ENCODE measurements at regions of chr12 and their contacts with region 1.

Region 1: GRCh38 chr12:120301962-120302815 is at the start of gene SIRT4:
- DNase-seq: peak; percentile 94
- ATAC-seq: peak; percentile 100
- H3K4me3 ChIP-seq: peak within 1 kb of the TSS; percentile 72 to 99 (median 92)
- H3K4me3 Mint-ChIP-seq: peak within 1 kb of the TSS; percentile 96
- H3K27ac ChIP-seq: peak within 1 kb of the TSS; percentile 16 to 34
- H3K27ac Mint-ChIP-seq: peak within 1 kb of the TSS; percentile 88
- H3K4me1 ChIP-seq: peaks cover 0 to 4% of the 10 kb centered on the region in 2 donors
- H3K4me1 Mint-ChIP-seq: peaks cover 7% of the 10 kb centered on the region
- H3K27me3 ChIP-seq: no peaks in the 10 kb centered on the region
- H3K27me3 Mint-ChIP-seq: no peaks in the 10 kb centered on the region
- CTCF ChIP-seq: peak; percentile 76
- total RNA-seq, gene SIRT4: 2.5 and 4.8 TPM in 2 replicates

Region 2: DNA sequence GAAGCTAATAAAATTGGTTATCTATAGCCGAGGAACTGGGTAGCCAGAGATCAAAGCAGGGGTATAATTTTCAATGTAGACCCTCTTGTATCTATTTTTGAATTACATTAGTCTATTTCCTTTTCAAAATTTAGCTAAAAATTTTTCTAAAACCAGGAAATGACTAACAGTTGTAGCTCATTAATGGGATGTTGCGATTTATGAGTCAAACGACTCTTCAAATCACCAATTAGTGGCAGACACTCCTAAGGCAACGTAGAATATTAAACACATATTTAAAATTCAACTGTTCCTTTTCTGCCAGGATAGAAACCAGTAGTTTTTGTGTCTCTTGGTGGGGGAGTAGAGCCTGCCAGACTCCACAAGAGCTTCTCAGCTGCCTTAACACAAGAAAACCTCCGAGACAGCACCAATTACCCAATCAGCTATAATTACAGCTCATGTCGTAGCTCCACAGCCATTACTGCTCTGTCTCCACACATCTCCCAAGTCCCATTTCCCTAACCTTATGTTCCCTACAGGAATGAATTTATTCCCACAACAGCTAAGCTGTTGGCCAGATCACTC is 134.6 kb before region 1 on chr12:
- CTCF ChIA-PET with region 1: no interaction called
- POLR2A ChIA-PET with region 1: no interaction called
- intact Hi-C with region 1: no loop called
- DNase-seq: no peak
- ATAC-seq: no peak
- H3K4me3 ChIP-seq: no peak overlapping the region
- H3K4me3 Mint-ChIP-seq: no peak overlapping the region
- H3K27ac ChIP-seq: no peak overlapping the region
- H3K27ac Mint-ChIP-seq: no peak overlapping the region
- H3K4me1 ChIP-seq: peaks cover 0 to 4% of the 10 kb centered on the region in 2 donors
- H3K4me1 Mint-ChIP-seq: peaks cover 2% of the 10 kb centered on the region
- H3K27me3 ChIP-seq: no peaks in the 10 kb centered on the region
- H3K27me3 Mint-ChIP-seq: no peaks in the 10 kb centered on the region
- CTCF ChIP-seq: no peak

Region 3: GRCh38 chr12:120200364-120200800 is 101.8 kb before region 1 on chr12:
- CTCF ChIA-PET with region 1: interaction called, 10 read pairs
- POLR2A ChIA-PET with region 1: interaction called, 12 read pairs
- intact Hi-C with region 1: no loop called
- DNase-seq: no peak
- ATAC-seq: no peak
- H3K4me3 ChIP-seq: peak overlapping the region; percentile 61 to 98 (median 93)
- H3K4me3 Mint-ChIP-seq: peak overlapping the region; percentile 95
- H3K27ac ChIP-seq: peak overlapping the region; percentile 49 to 80
- H3K27ac Mint-ChIP-seq: peak overlapping the region; percentile 100
- H3K4me1 ChIP-seq: peaks cover 22 to 29% of the 10 kb centered on the region in 2 donors
- H3K4me1 Mint-ChIP-seq: peaks cover 25% of the 10 kb centered on the region
- H3K27me3 ChIP-seq: no peaks in the 10 kb centered on the region
- H3K27me3 Mint-ChIP-seq: no peaks in the 10 kb centered on the region
- CTCF ChIP-seq: no peak

Region 4: GRCh38 chr12:120317224-120318105 is 15.3 kb after region 1 on chr12:
- CTCF ChIA-PET with region 1: interaction called, 24 read pairs
- POLR2A ChIA-PET with region 1: interaction called, 14 read pairs
- intact Hi-C with region 1: loop called (anchors 1 kb)
- DNase-seq: peak; percentile 99
- ATAC-seq: peak; percentile 99
- H3K4me3 ChIP-seq: peak overlapping the region; percentile 55 to 78 (median 66)
- H3K4me3 Mint-ChIP-seq: peak overlapping the region; percentile 76
- H3K27ac ChIP-seq: peak overlapping the region; percentile 86 to 95
- H3K27ac Mint-ChIP-seq: peak overlapping the region; percentile 75
- H3K4me1 ChIP-seq: peaks cover 10 to 13% of the 10 kb centered on the region in 2 donors
- H3K4me1 Mint-ChIP-seq: peaks cover 14% of the 10 kb centered on the region
- H3K27me3 ChIP-seq: peaks cover 0 to 6% (median 0%) of the 10 kb centered on the region in 4 experiments
- H3K27me3 Mint-ChIP-seq: peaks cover 3% of the 10 kb centered on the region
- CTCF ChIP-seq: peak; percentile 50

Measured in B cell (primary cell).